IMR-90 (cell line): ENCODE measurements at regions of chr1 and their contacts with region 1.

Region 1: GRCh38 chr1:105270966-105271365 is 1521.3 kb downstream of the AMY1C start:
- DNase-seq: no peak
- ATAC-seq: no peak
- H3K4me3 ChIP-seq: no peak overlapping the region
- H3K27ac ChIP-seq: no peak overlapping the region
- H3K4me1 ChIP-seq: no peaks in the 10 kb centered on the region
- H3K27me3 ChIP-seq: no peaks in the 10 kb centered on the region
- CTCF ChIP-seq: no peak
- POLR2A ChIP-seq: no peak
- RAD21 ChIP-seq: no peak

Region 2: DNA sequence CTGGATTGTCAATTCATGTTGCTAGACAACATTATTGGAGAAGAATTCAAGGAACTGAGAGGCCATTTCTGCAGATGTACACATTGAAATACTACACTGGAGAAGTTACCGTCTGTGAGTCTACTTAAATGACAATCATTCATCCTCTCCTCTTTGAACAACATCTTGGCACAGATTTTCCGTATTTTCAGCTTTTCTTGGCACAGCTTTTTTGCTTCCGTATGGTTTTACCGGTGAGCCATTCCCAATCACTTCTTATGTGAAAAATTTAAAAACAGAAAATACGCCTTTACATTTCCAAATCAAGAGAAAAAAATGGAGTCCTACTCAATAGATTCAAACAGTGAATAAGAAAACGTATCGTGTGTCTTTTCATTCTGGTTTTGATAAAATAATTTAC is 27.6 kb before region 1 on chr1:
- CTCF ChIA-PET with region 1: no interaction called
- POLR2A ChIA-PET with region 1: no interaction called
- dilution Hi-C with region 1: no loop called
- in situ Hi-C with region 1: no loop called
- intact Hi-C with region 1: no loop called
- DNase-seq: no peak
- ATAC-seq: no peak
- H3K4me3 ChIP-seq: no peak overlapping the region
- H3K27ac ChIP-seq: no peak overlapping the region
- H3K4me1 ChIP-seq: no peaks in the 10 kb centered on the region
- H3K27me3 ChIP-seq: no peaks in the 10 kb centered on the region
- CTCF ChIP-seq: no peak
- POLR2A ChIP-seq: no peak
- RAD21 ChIP-seq: no peak

Region 3: GRCh38 chr1:107153014-107153413 is 1882.0 kb after region 1 on chr1:
- CTCF ChIA-PET with region 1: no interaction called
- POLR2A ChIA-PET with region 1: no interaction called
- dilution Hi-C with region 1: no loop called
- in situ Hi-C with region 1: no loop called
- intact Hi-C with region 1: loop called (anchors 10 kb)
- DNase-seq: no peak
- ATAC-seq: no peak
- H3K4me3 ChIP-seq: no peak overlapping the region
- H3K27ac ChIP-seq: no peak overlapping the region
- H3K4me1 ChIP-seq: no peaks in the 10 kb centered on the region
- H3K27me3 ChIP-seq: no peaks in the 10 kb centered on the region
- CTCF ChIP-seq: no peak
- POLR2A ChIP-seq: no peak
- RAD21 ChIP-seq: no peak